Tibial artery (tissue), 4 donors: ENCODE measurements at regions of chr11 and their contacts with region 1.

Region 1: DNA sequence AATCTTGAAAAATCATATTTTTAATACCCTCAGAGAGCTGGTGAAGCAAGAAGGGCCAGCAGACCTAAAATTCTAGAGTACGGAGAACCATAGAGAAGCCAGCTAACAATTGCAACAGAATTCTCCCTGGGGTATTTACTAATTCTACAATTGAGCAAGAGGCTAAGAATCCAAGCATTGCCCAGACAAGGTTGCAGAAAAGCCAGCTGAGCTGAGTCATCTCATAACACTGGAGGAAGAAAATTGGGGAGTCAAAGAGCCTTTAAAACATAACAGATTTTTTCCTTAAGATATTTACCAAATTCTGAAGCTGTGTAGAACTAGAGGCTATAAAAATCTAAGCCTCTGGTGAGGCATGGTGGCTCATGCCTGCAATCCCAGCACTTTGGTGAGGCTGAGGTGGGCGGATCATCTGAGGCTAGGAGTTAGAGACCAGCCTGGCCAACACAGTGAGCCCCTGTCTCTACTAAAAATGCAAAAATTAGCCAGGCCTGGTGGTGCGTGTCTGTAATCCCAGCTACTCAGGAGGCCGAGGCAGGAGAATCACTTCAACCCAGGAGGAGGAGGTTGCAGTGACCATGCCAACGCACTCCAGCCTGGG is 13.6 kb upstream of the TMEM216 start:
- DNase-seq: peak; percentile 75 to 82
- H3K4me3 ChIP-seq: no peak overlapping the region
- H3K27ac ChIP-seq: peak overlapping the region; percentile 54 to 87
- H3K4me1 ChIP-seq: peaks cover 0 to 24% (median 14%) of the 10 kb centered on the region in 4 donors
- H3K27me3 ChIP-seq: no peaks in the 10 kb centered on the region
- CTCF ChIP-seq: no peak

Region 2: DNA sequence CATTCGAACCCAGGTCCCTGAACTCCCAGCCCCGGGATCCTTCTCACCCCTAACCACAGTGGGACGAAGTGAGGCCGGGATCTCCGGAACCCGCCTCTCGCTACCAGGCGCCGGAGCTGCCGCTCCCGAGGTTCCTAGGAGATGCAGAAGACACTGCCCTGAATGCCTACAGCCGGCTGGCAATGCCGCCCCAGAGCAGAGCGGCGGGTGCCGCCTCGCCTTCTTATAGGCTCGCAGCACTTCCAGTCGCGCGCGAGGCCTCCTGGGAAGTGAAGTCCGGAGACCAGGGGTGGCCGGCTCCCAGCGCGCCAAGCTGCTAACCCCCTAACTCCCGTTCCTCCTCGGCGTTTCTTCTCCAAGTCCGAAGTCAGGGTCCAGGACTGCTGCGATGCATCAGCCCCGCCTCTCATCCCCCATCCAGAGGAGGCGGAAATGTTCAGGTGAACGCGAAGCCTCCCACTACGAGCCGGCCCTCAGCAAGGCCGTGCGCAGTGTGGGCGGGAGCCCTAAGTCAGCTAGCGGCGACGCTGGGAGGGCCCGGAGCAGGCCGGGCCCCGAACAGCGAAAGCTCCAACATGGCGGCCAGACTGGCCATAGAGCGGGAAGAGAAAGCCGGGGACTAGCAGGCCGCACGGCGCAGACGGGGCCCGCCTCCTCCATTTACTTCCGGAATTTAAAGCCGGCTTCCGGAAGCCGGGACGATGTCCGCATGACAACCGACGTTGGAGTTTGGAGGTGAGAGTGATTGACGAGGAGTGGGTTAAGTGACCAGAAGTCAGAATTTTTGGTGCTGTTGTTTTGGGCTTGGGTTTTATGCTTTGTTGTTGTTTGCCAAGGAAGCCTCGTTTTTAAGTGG is 16.9 kb before region 1 on chr11 and contains the starts of genes CYB561A3 and TMEM138:
- intact Hi-C with region 1: loop called (anchors 1 kb)
- DNase-seq: peak; percentile 94 to 95
- H3K4me3 ChIP-seq: peak within 1 kb of the TSS; percentile 60 to 89
- H3K27ac ChIP-seq: peak within 1 kb of the TSS; percentile 87 to 99
- H3K4me1 ChIP-seq: peaks cover 0 to 48% (median 16%) of the 10 kb centered on the region in 4 donors
- H3K27me3 ChIP-seq: no peaks in the 10 kb centered on the region
- CTCF ChIP-seq: no peak